PC-3 (cell line): ENCODE measurements at regions of chr3 and their contacts with region 1.

Region 1: DNA sequence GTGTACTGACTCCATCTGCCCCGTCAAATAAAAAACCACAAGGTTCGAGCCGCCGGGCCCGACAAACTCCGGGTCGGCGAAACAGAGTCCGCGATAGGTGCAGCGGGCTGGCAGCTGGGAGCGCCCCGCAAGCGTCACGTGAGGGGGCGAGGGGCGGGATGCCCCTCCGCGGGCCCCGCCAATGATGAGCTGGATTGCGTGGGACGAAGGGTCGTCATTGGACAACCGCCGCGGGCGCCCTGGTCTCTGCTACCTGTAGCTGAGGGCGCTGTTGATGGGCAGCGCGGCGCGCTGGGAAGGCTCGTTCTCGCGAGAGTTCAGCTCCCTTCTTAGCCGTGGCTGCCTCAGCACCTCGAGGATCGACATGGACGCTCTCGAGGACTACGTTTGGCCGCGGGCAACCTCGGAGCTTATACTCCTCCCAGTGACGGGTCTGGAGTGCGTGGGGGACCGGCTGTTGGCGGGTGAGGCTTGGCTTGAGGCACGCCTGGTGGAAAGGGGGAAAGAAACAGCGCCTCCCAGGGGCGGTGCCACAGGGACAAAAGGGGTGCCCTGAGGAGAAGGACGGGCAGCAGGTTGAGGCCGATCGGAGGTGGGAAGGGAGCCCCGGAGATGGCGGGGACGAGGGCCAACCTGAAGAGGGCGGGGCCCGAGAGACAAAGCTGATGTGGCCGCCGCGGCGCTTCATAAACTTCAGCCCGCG is at the start of gene WDR6:
- DNase-seq: peak; percentile 99
- ATAC-seq: peak; percentile 89
- H3K4me3 ChIP-seq: peak within 1 kb of the TSS; percentile 79
- H3K27ac ChIP-seq: peak within 1 kb of the TSS; percentile 89
- H3K4me1 ChIP-seq: peaks cover 17% of the 10 kb centered on the region
- H3K27me3 ChIP-seq: no peaks in the 10 kb centered on the region
- CTCF ChIP-seq: peak; percentile 55
- total RNA-seq, gene WDR6: 92.7 and 117 TPM in 2 replicates

Region 2: GRCh38 chr3:48952510-48953118 is 54.6 kb before region 1 on chr3:
- CTCF ChIA-PET with region 1: no interaction called
- POLR2A ChIA-PET with region 1: no interaction called
- intact Hi-C with region 1: no loop called
- DNase-seq: peak; percentile 59
- ATAC-seq: peak; percentile 89
- H3K4me3 ChIP-seq: no peak overlapping the region
- H3K27ac ChIP-seq: no peak overlapping the region
- H3K4me1 ChIP-seq: no peaks in the 10 kb centered on the region
- H3K27me3 ChIP-seq: no peaks in the 10 kb centered on the region
- CTCF ChIP-seq: peak; percentile 84

Region 3: DNA sequence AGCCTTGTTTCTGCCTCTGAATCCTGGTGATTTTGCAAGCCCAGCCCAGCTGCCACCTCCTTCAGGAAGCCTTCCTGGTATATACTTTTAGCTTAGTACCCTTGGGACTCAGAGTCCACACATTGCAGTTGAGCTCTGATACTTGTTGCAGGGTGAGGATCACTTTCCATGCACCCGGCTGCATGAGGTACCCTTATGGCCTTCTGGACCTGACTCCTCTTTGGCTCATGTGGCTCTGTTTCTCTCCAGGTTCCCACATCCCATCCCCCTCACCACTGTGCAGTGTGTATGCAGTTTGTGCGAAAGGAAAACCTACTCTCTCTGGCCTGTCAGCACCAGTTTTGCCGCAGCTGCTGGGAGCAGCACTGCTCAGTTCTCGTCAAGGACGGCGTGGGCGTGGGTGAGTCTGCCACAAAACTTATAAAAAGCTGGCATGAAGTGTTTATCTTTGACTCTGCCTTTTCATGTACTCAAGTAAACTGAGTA is 40.3 kb before region 1 on chr3:
- CTCF ChIA-PET with region 1: no interaction called
- POLR2A ChIA-PET with region 1: no interaction called
- intact Hi-C with region 1: no loop called
- DNase-seq: no peak
- ATAC-seq: no peak
- H3K4me3 ChIP-seq: no peak overlapping the region
- H3K27ac ChIP-seq: no peak overlapping the region
- H3K4me1 ChIP-seq: no peaks in the 10 kb centered on the region
- H3K27me3 ChIP-seq: no peaks in the 10 kb centered on the region
- CTCF ChIP-seq: no peak

Region 4: DNA sequence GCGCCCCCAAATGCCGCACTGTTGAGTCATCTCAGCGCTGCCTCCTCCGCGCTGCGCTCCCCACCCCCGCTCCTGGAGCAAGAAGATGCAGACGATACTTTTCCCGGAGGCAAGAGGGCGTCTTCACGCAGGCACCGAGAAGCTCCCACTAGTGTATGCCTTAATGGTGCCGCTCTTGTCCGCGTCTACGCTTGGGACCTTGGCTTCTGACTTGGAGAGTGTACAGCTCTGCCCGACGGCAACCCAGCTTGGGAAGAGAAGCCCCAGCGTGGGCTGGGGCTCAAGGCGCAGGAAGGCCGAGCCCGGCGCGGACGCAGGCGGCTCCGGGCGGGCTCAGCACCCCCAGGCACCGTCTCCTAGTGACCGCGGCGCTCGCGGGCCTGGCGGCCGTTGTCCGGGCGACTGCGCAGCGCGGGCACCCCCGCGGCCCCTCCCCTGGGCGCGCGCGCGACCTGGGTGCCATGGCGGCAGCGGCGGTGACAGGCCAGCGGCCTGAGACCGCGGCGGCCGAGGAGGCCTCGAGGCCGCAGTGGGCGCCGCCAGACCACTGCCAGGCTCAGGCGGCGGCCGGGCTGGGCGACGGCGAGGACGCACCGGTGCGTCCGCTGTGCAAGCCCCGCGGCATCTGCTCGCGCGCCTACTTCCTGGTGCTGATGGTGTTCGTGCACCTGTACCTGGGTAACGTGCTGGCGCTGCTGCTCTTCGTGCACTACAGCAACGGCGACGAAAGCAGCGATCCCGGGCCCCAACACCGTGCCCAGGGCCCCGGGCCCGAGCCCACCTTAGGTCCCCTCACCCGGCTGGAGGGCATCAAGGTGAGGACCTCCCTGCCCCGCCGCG is 17.2 kb before region 1 on chr3 and contains the start of gene P4HTM:
- CTCF ChIA-PET with region 1: interaction called, 15 read pairs
- POLR2A ChIA-PET with region 1: interaction called, 10 read pairs
- intact Hi-C with region 1: loop called (anchors 1 kb)
- DNase-seq: peak; percentile 88
- ATAC-seq: peak; percentile 73
- H3K4me3 ChIP-seq: peak within 1 kb of the TSS; percentile 90
- H3K27ac ChIP-seq: peak within 1 kb of the TSS; percentile 49
- H3K4me1 ChIP-seq: peaks cover 22% of the 10 kb centered on the region
- H3K27me3 ChIP-seq: no peaks in the 10 kb centered on the region
- CTCF ChIP-seq: peak; percentile 51
- total RNA-seq, gene P4HTM: 44.5 and 50.1 TPM in 2 replicates

Region 5: GRCh38 chr3:49276475-49277382 is 269.5 kb after region 1 on chr3 and contains the start of gene C3orf62:
- CTCF ChIA-PET with region 1: no interaction called
- POLR2A ChIA-PET with region 1: no interaction called
- intact Hi-C with region 1: no loop called
- DNase-seq: peak; percentile 13
- ATAC-seq: peak; percentile 79
- H3K4me3 ChIP-seq: no peak within 1 kb of the TSS
- H3K27ac ChIP-seq: no peak within 1 kb of the TSS
- H3K4me1 ChIP-seq: 0 out of 2 replicates have a peak, but pooled peaks cover 3% of the 10 kb centered on the region
- H3K27me3 ChIP-seq: no peaks in the 10 kb centered on the region
- CTCF ChIP-seq: no peak
- total RNA-seq, gene C3orf62: 3.9 and 10.3 TPM in 2 replicates